Activated T-helper 2 cell treated with anti-CD3 and anti-CD28 coated beads, Interferon-gamma antibody, Interleukin-2, Interleukin-4, amounts not matched to agents 10 μg/mL and 5 μg/mL and 100 μg/mL, durations not matched to agents 14 hours and 24 hours and 36 hours (primary cell): ENCODE measurements at regions of chr7 and their contacts with region 1.

Region 1: GRCh38 chr7:32495298-32496176 is at the start of gene AVL9:
- DNase-seq: peak; percentile 99
- H3K4me3 Mint-ChIP-seq: peak within 1 kb of the TSS; percentile 94
- H3K27ac Mint-ChIP-seq: peak within 1 kb of the TSS; percentile 95
- H3K4me1 Mint-ChIP-seq: peaks cover 33% of the 10 kb centered on the region
- H3K27me3 Mint-ChIP-seq: no peaks in the 10 kb centered on the region
- total RNA-seq, gene AVL9: 40.8 and 43.9 TPM in 2 replicates

Region 2: GRCh38 chr7:32357535-32358277 is 137.8 kb before region 1 on chr7:
- intact Hi-C with region 1: no loop called
- DNase-seq: no peak
- H3K4me3 Mint-ChIP-seq: no peak overlapping the region
- H3K27ac Mint-ChIP-seq: no peak overlapping the region
- H3K4me1 Mint-ChIP-seq: no peaks in the 10 kb centered on the region
- H3K27me3 Mint-ChIP-seq: no peaks in the 10 kb centered on the region

Region 3: DNA sequence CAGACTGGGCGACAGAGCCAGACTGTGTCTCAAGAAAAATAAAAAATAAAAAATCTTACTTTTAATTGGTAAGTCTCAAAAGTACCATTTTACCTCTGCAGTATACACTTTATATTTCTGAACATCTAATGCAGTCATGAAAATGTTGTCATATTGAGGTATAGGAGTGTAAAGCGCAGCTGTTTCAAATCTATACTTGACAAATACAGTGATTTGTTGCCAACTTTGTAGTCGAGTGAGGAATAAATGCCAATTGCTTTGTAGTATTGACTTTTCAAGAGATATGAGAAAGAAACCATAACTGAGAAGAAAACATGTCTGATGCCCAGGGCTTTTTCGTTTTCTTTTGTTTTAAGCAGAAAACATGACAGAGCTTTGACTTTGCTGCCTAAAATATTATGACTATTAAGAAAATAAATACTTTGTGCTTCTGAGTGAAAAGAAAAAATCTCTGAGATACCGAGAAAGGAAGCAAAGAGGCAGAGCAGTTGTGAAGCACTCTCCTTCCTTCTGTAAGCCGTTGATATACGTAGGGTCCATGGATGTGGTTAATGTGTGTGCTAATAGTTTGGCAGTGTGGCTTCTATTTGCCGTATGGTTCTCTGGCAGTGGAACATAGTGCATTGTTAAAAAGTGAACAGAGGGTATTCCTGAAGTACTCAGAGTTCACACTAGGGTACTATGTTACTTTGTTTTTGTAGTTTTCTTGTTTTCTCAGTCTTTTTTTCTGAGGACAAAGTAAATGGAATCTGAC is 37.9 kb after region 1 on chr7:
- intact Hi-C with region 1: no loop called
- DNase-seq: no peak
- H3K4me3 Mint-ChIP-seq: no peak overlapping the region
- H3K27ac Mint-ChIP-seq: no peak overlapping the region
- H3K4me1 Mint-ChIP-seq: peaks cover 3% of the 10 kb centered on the region
- H3K27me3 Mint-ChIP-seq: no peaks in the 10 kb centered on the region

Region 4: DNA sequence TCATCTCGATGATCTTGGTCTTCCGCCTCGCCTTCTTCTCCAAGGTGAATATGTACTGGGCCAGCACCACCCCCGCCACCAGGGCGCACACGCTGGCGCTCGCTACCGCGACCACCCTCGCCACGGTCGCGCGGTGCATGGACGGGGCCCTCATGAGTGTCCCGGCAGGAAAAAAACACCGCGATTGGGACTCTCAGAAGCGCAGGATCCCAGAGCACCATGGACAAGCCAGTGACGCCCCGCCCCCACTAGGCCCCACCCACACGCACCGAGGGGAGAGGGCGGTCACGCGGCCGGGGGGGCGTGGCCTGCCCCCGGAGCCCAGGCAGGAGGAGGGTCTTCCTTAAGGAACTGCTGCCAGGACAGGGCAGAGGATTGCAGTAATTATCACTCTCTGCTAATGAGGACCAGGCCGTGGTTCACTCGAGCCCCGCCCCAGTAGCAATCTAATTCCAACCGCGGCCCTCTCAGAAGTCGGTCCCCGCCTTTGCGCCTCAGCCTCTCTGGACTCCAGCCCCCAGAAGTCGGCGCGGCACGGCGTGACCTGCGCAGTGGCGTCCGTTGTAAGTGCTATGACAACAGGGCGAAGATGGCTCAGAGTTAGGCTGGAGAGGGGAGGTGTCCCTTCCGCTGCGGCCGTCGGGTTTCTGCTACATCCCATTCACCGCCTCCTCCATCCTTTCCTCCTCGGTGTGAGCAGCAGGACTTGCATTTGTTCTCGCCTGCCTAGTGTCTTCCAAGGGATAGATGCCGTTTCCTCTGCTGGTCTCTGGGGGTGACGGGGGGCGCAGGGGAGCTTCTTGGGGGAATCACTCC is 633.7 kb after region 1 on chr7 and contains the start of gene BBS9:
- intact Hi-C with region 1: loop called (anchors 2 kb)
- DNase-seq: peak; percentile 89
- H3K4me3 Mint-ChIP-seq: peak within 1 kb of the TSS; percentile 96
- H3K27ac Mint-ChIP-seq: peak within 1 kb of the TSS; percentile 83
- H3K4me1 Mint-ChIP-seq: peaks cover 19% of the 10 kb centered on the region
- H3K27me3 Mint-ChIP-seq: no peaks in the 10 kb centered on the region
- total RNA-seq, gene BBS9: 4.8 and 6.8 TPM in 2 replicates